Left cardiac atrium (tissue), 4 donors: ENCODE measurements at regions of chr1 and their contacts with region 1.

Region 1: DNA sequence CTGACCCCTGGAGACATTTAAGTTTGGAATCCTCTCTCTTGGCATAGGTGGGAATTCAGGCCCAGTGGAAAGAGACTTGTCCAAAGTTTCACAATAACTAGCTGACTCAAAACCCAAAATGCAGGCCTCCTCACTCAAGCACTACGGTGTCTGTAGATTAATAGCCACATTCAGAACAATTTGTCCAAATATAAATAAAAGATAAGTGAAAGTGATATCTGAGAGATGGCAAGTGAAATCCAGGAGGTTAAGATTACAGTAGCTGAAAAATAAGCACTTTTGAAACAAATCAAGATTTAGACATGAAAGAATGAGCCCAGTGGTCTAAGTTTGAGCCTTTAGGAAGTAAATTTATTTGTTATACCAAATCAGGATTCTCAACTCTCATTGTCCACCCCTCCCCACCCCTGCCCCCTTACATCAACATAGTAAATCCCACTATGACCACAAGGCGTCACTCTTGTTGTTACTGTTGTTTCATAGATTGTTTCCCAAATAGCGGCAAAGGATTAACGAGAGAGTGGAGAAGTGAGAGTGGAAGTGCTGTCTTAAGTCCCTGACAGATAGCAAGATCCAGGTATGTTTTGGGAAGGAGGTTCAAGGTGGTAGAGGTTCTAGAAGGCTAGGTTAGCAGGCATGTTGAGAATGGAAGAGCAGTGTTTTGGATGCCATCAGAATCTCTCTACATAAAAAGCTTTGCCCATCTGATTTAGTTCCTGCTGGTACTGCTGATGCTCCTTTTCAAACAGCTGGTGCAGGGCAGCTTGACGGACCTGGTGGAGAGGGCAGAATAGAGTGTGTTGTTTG is 7.1 kb upstream of the TPM3 start:
- DNase-seq: no peak
- ATAC-seq: peak; percentile 78 to 84

Region 2: GRCh38 chr1:153288634-153289275 is 910.2 kb before region 1 on chr1:
- intact Hi-C with region 1: no loop called
- DNase-seq: no peak
- ATAC-seq: no peak

Region 3: GRCh38 chr1:154272217-154272998 is 73.4 kb after region 1 on chr1 and contains the start of gene HAX1:
- intact Hi-C with region 1: loop called in 1 of 2 experiments (anchors 2 kb)
- DNase-seq: peak; percentile 95
- ATAC-seq: peak; percentile 93
- total RNA-seq, gene HAX1: 112 to 120 TPM